Activated naive CD8-positive, alpha-beta T cell treated with anti-CD3 and anti-CD28 coated beads, Interleukin-2, amount 10 ng/mL, durations not matched to agents 7 days and 5 days (primary cell): ENCODE measurements at regions of chr17 and their contacts with region 1.

Region 1: GRCh38 chr17:8362651-8363332 is 13.7 kb downstream of the KRABD2 start:
- DNase-seq: no peak
- ATAC-seq: no peak
- H3K4me3 Mint-ChIP-seq: no peak overlapping the region
- H3K27ac Mint-ChIP-seq: no peak overlapping the region
- H3K4me1 Mint-ChIP-seq: peaks cover 12% of the 10 kb centered on the region
- H3K27me3 Mint-ChIP-seq: peaks cover 2% of the 10 kb centered on the region

Region 2: DNA sequence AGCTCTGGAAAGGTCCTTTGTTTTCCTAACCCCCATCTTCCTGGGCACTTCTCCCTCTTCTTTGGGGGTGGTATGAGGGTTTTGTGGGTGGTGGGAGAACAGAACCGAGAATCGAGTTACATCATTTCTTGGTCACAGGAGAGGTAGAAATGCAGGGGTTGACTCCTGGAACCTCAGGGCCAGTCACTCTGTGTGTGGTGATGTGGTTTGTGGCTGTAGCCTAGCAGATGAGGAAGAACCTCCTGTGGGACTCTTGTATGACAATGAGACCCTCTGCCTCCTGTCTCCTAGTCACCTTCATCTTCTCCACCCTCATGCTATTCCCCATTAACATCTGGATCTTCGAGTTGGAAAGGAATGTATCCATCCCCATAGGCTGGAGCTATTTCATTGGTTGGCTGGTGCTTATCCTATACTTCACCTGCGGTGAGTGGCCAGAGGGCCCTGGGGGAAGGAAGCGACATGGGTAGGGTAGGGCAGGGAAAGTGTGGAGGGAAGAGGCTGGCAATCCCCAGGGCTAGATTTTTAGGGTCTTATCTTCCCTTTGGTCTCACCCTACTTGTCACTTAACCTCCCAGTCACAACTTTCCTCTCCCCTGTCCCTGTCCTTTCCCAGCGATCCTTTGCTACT is 17.6 kb before region 1 on chr17:
- POLR2A ChIA-PET with region 1: no interaction called
- DNase-seq: no peak
- ATAC-seq: peak; percentile 22
- H3K4me3 Mint-ChIP-seq: no peak overlapping the region
- H3K27ac Mint-ChIP-seq: no peak overlapping the region
- H3K4me1 Mint-ChIP-seq: peaks cover 18% of the 10 kb centered on the region
- H3K27me3 Mint-ChIP-seq: peaks cover 53% of the 10 kb centered on the region

Region 3: GRCh38 chr17:8376271-8377067 is 13.7 kb after region 1 on chr17 and contains the start of gene KRABD2:
- POLR2A ChIA-PET with region 1: interaction called, 10 read pairs
- DNase-seq: peak; percentile 92
- ATAC-seq: peak; percentile 99
- H3K4me3 Mint-ChIP-seq: peak within 1 kb of the TSS; percentile 92
- H3K27ac Mint-ChIP-seq: peak within 1 kb of the TSS; percentile 82
- H3K4me1 Mint-ChIP-seq: peaks cover 43% of the 10 kb centered on the region
- H3K27me3 Mint-ChIP-seq: no peaks in the 10 kb centered on the region